Heart left ventricle (tissue), 16 donors: ENCODE measurements at regions of chr1 and their contacts with region 1.

Region 1: DNA sequence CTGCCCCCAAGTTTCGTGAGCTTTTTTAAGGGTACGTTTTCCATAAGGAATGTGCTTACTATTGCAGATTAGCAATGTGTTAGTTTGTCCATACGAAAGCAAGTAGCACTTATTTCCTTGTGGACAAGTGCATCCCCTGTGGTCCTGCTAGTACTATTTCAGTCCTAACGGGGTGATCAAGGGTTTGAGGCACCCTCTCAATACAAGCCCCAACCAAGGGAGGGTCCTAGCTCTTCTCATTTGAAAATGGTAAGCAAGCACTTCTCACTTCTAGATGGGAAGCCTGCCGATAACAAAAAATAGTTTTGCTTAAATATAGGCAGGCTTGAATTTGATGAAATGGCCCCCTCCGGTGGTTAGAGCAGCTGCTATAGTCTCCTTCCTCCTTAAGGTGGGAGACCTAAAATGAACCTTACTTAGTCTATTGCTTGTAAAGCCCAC is 64.0 kb upstream of the HMCN1 start:
- DNase-seq: peak in 3 of 5 donors; percentile 29 to 52 (median 40)
- ATAC-seq: peak; percentile 48 to 77 (median 70)
- H3K4me3 ChIP-seq: peak overlapping the region in 5 of 12 donors; percentile 2 to 22 (median 13)
- H3K27ac ChIP-seq: peak overlapping the region in 2 of 12 donors; percentile 7 to 54
- H3K4me1 ChIP-seq: peaks cover 0 to 42% (median 12%) of the 10 kb centered on the region in 12 donors
- H3K27me3 ChIP-seq: no peaks in the 10 kb centered on the region
- CTCF ChIP-seq: peak; percentile 37 to 79 (median 66)
- POLR2A ChIP-seq: no peak

Region 2: GRCh38 chr1:185170291-185170848 is 499.8 kb before region 1 on chr1:
- intact Hi-C with region 1: loop called in 2 of 10 experiments (anchors 10 kb)
- DNase-seq: peak in 1 of 5 donors; percentile 19
- ATAC-seq: peak in 3 of 4 donors; percentile 39 to 64 (median 53)
- H3K4me3 ChIP-seq: no peak overlapping the region
- H3K27ac ChIP-seq: no peak overlapping the region
- H3K4me1 ChIP-seq: peaks cover 0 to 4% (median 0%) of the 10 kb centered on the region in 12 donors
- H3K27me3 ChIP-seq: no peaks in the 10 kb centered on the region
- CTCF ChIP-seq: peak; percentile 31 to 74 (median 62)
- POLR2A ChIP-seq: no peak

Region 3: DNA sequence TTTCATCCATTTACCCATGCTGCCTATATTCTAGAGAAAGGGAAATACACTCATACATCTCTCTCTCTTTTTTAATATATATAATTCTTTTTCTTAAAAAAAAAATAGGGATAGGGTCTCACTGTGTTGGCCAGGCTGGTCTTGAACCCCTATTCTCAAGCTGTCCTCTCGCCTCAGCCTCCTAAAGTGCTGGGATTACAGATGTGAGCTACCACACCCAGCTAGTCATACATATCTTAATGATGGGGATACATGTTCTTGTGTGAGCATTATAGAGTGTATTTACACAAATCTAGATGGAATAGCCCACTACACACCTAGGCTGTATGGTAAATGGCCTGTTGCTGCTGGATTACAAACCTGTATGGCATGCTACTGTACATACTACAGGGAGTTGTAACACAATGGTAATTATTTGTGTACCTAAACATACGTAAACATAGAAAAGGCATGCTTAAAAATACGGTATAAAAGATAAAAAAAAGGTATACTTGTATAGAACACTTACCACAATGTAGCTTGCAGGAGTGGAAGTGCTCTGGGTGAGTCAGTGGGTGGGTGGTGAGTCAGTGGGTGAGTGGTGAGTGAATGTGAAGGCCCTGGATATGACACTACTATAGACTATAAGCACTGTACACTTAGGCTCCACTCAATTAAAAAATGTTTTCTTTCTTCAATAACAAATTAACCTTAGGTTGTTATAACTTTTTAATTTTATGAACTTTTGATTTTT is 426.0 kb before region 1 on chr1:
- intact Hi-C with region 1: loop called in 9 of 10 experiments (anchors 2 to 10 kb)
- DNase-seq: no peak
- ATAC-seq: no peak
- H3K4me3 ChIP-seq: no peak overlapping the region
- H3K27ac ChIP-seq: no peak overlapping the region
- H3K4me1 ChIP-seq: peaks cover 0 to 18% (median 6%) of the 10 kb centered on the region in 12 donors
- H3K27me3 ChIP-seq: no peaks in the 10 kb centered on the region
- CTCF ChIP-seq: no peak
- POLR2A ChIP-seq: no peak

Region 4: DNA sequence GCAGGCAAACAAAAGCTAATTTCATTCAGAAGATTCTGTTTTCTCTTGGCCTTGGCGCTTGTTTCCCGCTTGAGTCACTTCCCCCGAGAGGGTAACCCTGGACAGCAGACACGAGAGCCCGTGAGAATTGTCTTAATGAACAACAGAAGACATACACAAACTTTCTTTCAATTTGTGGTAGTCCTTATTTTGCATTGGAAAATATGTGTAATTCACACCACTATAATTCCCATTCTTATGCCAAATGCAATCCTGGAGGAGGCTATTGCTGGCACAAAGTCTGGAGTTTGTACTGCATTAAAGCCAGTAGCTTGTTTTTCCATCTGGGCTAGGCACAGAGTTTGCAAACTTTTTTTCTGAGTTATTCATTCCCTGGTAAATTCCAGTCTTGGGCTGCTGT is 243.4 kb before region 1 on chr1:
- intact Hi-C with region 1: loop called in 5 of 10 experiments (anchors 5 to 10 kb)
- DNase-seq: peak in 4 of 5 donors; percentile 41 to 54 (median 53)
- ATAC-seq: peak; percentile 80 to 90 (median 84)
- H3K4me3 ChIP-seq: no peak overlapping the region
- H3K27ac ChIP-seq: peak overlapping the region in 11 of 12 donors; percentile 5 to 81 (median 47)
- H3K4me1 ChIP-seq: peaks cover 0 to 23% (median 8%) of the 10 kb centered on the region in 12 donors
- H3K27me3 ChIP-seq: no peaks in the 10 kb centered on the region
- CTCF ChIP-seq: peak in 2 of 12 donors; percentile 35 to 36
- POLR2A ChIP-seq: no peak

Region 5: GRCh38 chr1:185566995-185567394 is 103.2 kb before region 1 on chr1:
- intact Hi-C with region 1: loop called in 1 of 10 experiments (anchors 5 kb)
- DNase-seq: no peak
- ATAC-seq: no peak
- H3K4me3 ChIP-seq: no peak overlapping the region
- H3K27ac ChIP-seq: peak overlapping the region in 1 of 12 donors; percentile 56
- H3K4me1 ChIP-seq: peaks cover 0 to 32% (median 5%) of the 10 kb centered on the region in 12 donors
- H3K27me3 ChIP-seq: no peaks in the 10 kb centered on the region
- CTCF ChIP-seq: no peak
- POLR2A ChIP-seq: no peak

Region 6: DNA sequence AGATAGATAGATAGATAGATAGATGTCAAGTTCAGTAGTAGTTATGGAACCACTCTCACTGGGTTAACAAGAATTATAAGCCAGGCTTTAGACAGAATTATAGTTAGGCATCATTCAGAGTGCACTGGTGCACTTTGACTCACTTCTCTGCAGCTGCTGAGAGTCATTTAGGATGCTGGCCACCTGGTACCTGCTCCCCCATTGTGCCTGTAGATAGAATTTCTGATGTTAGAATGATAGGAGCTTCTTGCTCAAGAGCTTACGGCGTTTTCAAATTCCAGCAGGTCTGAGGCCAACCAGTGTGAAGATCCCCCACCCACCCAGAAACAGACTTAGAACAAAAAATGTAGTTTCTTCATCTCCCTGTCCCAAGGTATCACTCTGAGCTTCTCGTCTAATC is 43.9 kb before region 1 on chr1:
- intact Hi-C with region 1: no loop called
- DNase-seq: no peak
- ATAC-seq: no peak
- H3K4me3 ChIP-seq: no peak overlapping the region
- H3K27ac ChIP-seq: no peak overlapping the region
- H3K4me1 ChIP-seq: no peaks in the 10 kb centered on the region
- H3K27me3 ChIP-seq: no peaks in the 10 kb centered on the region
- CTCF ChIP-seq: no peak
- POLR2A ChIP-seq: no peak

Region 7: GRCh38 chr1:185767508-185768120 is 97.4 kb after region 1 on chr1:
- intact Hi-C with region 1: no loop called
- DNase-seq: no peak
- ATAC-seq: no peak
- H3K4me3 ChIP-seq: no peak overlapping the region
- H3K27ac ChIP-seq: no peak overlapping the region
- H3K4me1 ChIP-seq: peaks cover 0 to 7% (median 0%) of the 10 kb centered on the region in 12 donors
- H3K27me3 ChIP-seq: no peaks in the 10 kb centered on the region
- CTCF ChIP-seq: no peak
- POLR2A ChIP-seq: no peak